ENCODE measurements at regions of chr3 and their contacts with region 1.

Region 1: DNA sequence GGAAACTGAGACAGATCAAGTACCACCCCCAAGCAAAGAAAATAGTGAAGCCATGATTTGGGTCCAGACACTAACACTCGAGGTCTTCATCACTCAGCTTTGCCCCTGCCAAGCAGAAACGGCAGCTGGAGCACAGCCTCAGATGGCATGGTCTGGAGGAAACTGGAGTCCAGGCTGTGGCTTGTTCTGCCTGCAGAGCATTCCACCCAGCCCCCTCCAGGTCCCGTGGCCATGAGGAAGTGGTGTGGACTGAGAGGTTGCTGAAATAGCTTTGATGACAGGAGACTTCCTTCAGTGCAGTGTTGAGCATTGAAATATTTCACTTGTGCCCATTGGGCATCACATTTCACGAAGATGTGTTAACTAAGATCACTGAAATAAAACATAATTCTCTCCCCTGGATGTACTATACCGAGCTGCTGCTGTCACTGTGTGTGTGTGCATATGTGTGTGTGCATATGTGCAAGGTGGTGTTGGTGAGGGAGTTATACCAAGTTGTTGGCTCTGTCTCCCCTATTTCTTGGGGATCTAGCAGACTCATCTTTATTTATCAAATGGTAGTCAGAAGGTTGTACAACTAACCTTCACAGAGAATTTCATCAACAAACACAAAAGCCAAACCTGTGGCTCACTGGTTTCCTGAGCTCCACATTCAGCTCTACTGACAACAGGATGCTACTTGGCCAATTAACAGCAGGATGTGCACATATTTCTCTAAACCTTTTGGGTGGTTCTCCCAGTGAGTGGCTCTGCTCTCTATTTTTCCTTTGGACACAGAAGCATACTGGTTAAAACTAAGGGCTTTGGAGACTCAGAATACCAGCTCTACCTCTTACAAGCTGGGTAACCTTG is 660.1 kb upstream of the CFAP20DC start:
- DNase-seq: no peak
- ATAC-seq: no peak
- H3K4me3 ChIP-seq: no peak overlapping the region
- H3K27ac ChIP-seq: no peak overlapping the region
- H3K4me1 ChIP-seq: no peaks in the 10 kb centered on the region
- H3K27me3 ChIP-seq: no peaks in the 10 kb centered on the region; a peak in 1 of 5 replicates
- CTCF ChIP-seq: no peak
- EP300 ChIP-seq: no peak
- POLR2A ChIP-seq: no peak
- RAD21 ChIP-seq: no peak

Region 2: DNA sequence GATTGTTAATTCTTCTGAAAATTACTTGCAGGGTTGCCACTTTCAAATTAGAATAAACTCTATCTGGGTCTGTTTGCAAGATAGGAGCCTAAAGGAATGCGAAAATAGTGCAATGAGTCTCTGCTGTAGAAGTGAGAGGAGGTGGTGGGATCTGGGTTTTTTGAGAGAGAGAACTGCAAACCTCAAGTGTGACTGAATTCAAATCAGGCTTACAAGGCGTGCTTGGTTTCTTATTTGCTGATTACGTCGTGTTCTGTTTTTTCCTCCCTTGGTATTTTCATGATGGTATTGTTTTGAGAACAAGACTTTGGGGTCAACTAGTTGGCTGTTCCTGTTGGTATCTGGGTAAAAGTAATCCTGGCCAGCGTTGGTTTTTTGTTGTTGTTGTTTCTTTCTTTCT is 169.2 kb before region 1 on chr3:
- CTCF ChIA-PET with region 1: no interaction called
- POLR2A ChIA-PET with region 1: no interaction called
- in situ Hi-C with region 1: no loop called
- intact Hi-C with region 1: no loop called
- DNase-seq: no peak
- ATAC-seq: no peak
- H3K4me3 ChIP-seq: no peak overlapping the region
- H3K27ac ChIP-seq: no peak overlapping the region
- H3K4me1 ChIP-seq: no peaks in the 10 kb centered on the region
- H3K27me3 ChIP-seq: peaks cover 0 to 4% of the 10 kb centered on the region in 2 experiments; a peak in 1 of 5 replicates
- CTCF ChIP-seq: no peak
- EP300 ChIP-seq: no peak
- POLR2A ChIP-seq: no peak
- RAD21 ChIP-seq: no peak

Region 3: DNA sequence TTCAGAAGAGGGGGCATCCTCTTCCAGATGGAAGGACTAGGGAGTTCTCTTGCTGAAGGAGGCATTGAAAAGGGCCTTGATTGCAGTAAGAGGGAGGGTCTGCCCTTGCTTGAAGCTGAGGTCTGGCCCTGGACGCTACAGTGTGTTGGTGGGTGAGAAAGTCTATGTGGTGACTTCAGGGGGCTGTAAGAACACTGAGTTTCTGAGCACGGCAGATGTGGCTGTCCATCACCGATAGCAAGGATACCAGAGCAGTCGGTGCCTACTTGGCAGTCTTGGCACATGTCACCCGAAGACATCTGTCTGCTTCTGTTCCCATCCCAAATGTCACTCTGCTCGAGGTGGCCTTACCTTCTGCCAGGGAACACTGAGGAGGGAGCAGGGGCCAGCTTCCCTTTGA is 29.0 kb before region 1 on chr3:
- CTCF ChIA-PET with region 1: no interaction called
- POLR2A ChIA-PET with region 1: no interaction called
- in situ Hi-C with region 1: no loop called
- intact Hi-C with region 1: loop called (anchors 1 kb)
- DNase-seq: no peak
- ATAC-seq: no peak
- H3K4me3 ChIP-seq: no peak overlapping the region
- H3K27ac ChIP-seq: no peak overlapping the region
- H3K4me1 ChIP-seq: no peaks in the 10 kb centered on the region
- H3K27me3 ChIP-seq: no peaks in the 10 kb centered on the region
- CTCF ChIP-seq: no peak
- EP300 ChIP-seq: no peak
- POLR2A ChIP-seq: no peak
- RAD21 ChIP-seq: no peak

Region 4: DNA sequence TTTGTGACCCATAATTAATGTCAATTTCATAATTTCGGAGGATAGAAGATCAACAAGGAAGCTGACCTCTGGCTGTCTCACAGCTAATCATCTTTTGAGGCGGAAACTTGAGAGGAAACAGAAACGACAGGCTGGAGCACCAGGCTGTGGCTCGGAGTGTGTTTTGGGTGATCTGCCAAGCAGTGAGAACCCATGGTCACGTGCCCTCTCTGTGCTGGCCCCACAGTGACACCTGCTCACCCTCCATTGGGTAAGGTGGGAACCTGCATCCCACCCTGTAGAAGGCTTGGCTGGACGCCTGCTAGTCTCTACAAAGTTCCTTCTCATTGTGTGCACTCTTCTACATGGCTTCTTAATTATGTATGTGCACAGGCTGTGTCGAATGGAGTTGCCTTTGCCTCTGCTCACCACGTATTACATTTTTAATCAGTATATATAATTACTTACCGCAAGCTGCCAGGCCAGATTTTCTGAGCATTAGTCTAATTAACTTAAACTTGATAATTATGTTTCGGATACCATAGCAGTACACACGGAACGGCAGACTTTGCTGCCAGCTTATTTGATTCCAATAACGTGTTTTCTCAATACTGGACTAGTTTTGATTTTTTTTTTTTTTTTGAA is 59.3 kb after region 1 on chr3:
- CTCF ChIA-PET with region 1: no interaction called
- POLR2A ChIA-PET with region 1: no interaction called
- in situ Hi-C with region 1: no loop called
- intact Hi-C with region 1: loop called (anchors 2 kb)
- DNase-seq: no peak
- ATAC-seq: no peak
- H3K4me3 ChIP-seq: no peak overlapping the region
- H3K27ac ChIP-seq: no peak overlapping the region
- H3K4me1 ChIP-seq: no peaks in the 10 kb centered on the region
- H3K27me3 ChIP-seq: peaks cover 0 to 3% of the 10 kb centered on the region in 2 experiments; a peak in 1 of 5 replicates
- CTCF ChIP-seq: no peak
- EP300 ChIP-seq: no peak
- POLR2A ChIP-seq: no peak
- RAD21 ChIP-seq: no peak